HepG2 (cell line): ENCODE measurements at regions of chr11 and their contacts with region 1.

Region 1: DNA sequence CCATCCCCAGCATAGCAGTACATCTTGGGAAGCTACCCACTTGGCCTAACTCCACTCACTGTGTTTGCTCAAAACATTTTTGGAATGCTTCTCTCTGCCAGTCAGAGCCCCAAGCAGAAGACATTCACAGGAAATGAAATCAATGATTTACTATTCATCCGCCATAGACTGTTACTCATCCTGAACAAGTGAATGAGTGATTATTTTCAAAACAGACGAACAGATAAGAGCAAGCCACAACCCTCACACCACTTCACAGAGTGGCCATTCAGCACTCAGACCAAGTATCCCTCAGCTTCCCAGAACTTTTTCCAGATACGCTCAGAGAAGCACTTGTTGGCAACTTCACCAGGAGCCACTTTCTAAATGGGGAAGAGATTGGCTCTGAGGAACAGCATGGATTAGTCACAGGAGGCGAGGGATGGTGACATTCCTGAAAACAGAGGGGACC is 13.0 kb upstream of the UBASH3B start:
- DNase-seq: peak; percentile 94
- ATAC-seq: peak; percentile 98
- H3K4me3 ChIP-seq: peak overlapping the region in 1 of 3 experiments; percentile 22; a peak in 1 of 6 replicates
- H3K27ac ChIP-seq: peak overlapping the region; percentile 60
- H3K4me1 ChIP-seq: peaks cover 34% of the 10 kb centered on the region
- H3K27me3 ChIP-seq: no peaks in the 10 kb centered on the region
- CTCF ChIP-seq: no peak
- EP300 ChIP-seq: peak in 1 of 2 experiments; percentile 51; a peak in 1 of 4 replicates
- POLR2A ChIP-seq: 0 out of 4 replicates have a peak, but pooled peaks of 1 of the 2 experiments have one; percentile 33
- RAD21 ChIP-seq: no peak

Region 2: GRCh38 chr11:122593473-122594420 is 48.8 kb before region 1 on chr11:
- CTCF ChIA-PET with region 1: no interaction called
- POLR2A ChIA-PET with region 1: no interaction called
- in situ Hi-C with region 1: no loop called
- intact Hi-C with region 1: no loop called
- DNase-seq: no peak
- ATAC-seq: no peak
- H3K4me3 ChIP-seq: no peak overlapping the region
- H3K27ac ChIP-seq: no peak overlapping the region
- H3K4me1 ChIP-seq: no peaks in the 10 kb centered on the region
- H3K27me3 ChIP-seq: peaks cover 0 to under 1% of the 10 kb centered on the region in 2 experiments; a peak in 1 of 5 replicates
- CTCF ChIP-seq: no peak
- EP300 ChIP-seq: no peak
- POLR2A ChIP-seq: no peak
- RAD21 ChIP-seq: no peak

Region 3: GRCh38 chr11:122655527-122656072 is 13.1 kb after region 1 on chr11 and contains the start of gene UBASH3B:
- CTCF ChIA-PET with region 1: no interaction called
- POLR2A ChIA-PET with region 1: interaction called, 18 read pairs
- in situ Hi-C with region 1: no loop called
- intact Hi-C with region 1: no loop called
- DNase-seq: peak; percentile 47
- ATAC-seq: peak; percentile 84
- H3K4me3 ChIP-seq: peak within 1 kb of the TSS; percentile 63 to 87 (median 81)
- H3K27ac ChIP-seq: no peak within 1 kb of the TSS
- H3K4me1 ChIP-seq: peaks cover 48% of the 10 kb centered on the region
- H3K27me3 ChIP-seq: peaks cover 0 to 19% of the 10 kb centered on the region in 2 experiments; a peak in 4 of 5 replicates
- CTCF ChIP-seq: peak; percentile 27; the same call in 1 of the 2 replicates
- EP300 ChIP-seq: no peak
- POLR2A ChIP-seq: peak in 1 of 2 experiments; percentile 48; a peak in 1 of 4 replicates
- RAD21 ChIP-seq: no peak
- total RNA-seq, gene UBASH3B: 4.4 and 5.1 TPM in 2 replicates

Region 4: DNA sequence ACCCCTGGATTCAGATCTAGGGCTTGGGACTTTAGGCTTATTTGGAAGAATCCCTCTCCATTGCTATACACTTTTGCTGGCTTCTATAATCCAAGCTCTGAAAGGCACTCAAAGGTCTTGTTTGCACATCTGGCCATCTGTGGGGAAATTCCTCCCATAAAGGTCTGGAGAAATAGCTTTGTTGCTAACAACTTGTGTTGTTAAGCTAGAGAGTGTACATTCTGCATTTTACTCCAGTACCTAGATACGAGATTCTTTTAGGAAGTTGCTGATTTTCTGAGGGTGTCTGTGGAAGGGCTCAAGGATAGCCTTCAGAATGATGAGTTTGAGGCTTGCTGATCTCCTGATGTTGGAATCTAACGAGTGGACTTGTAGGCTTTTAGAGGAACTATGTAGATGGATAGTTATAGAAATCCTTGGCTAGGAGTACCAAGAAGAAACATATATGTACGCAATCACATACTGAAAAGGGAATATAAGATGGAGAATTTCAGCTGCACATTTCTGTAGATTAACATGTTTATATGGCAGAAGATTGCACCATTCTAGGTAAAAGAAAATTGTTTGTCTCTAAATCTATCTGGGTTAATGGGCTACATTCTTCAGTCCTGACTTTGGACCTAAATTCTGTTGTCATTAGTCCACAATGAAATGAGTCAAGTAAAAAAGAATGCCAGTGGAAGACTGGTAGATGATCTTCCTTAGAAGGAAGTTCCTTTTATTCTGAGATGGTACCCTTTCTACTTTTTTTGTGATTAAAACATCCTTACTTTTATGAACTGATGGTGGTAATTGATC is 64.0 kb after region 1 on chr11:
- CTCF ChIA-PET with region 1: no interaction called
- POLR2A ChIA-PET with region 1: interaction called, 9 read pairs
- in situ Hi-C with region 1: no loop called
- intact Hi-C with region 1: loop called (anchors 2 kb)
- DNase-seq: peak; percentile 88
- ATAC-seq: peak; percentile 95
- H3K4me3 ChIP-seq: peak overlapping the region in 2 of 3 experiments; percentile 14 to 27; a peak in 2 of 6 replicates
- H3K27ac ChIP-seq: peak overlapping the region; percentile 78
- H3K4me1 ChIP-seq: peaks cover 35% of the 10 kb centered on the region
- H3K27me3 ChIP-seq: no peaks in the 10 kb centered on the region
- CTCF ChIP-seq: no peak
- EP300 ChIP-seq: peak; percentile 43 to 65; a peak in 2 of 4 replicates
- POLR2A ChIP-seq: no peak
- RAD21 ChIP-seq: no peak

Region 5: GRCh38 chr11:123062158-123062891 is 419.8 kb after region 1 on chr11:
- CTCF ChIA-PET with region 1: no interaction called
- POLR2A ChIA-PET with region 1: no interaction called
- in situ Hi-C with region 1: no loop called
- intact Hi-C with region 1: loop called (anchors 5 kb)
- DNase-seq: peak; percentile 97
- ATAC-seq: peak; percentile 94
- H3K4me3 ChIP-seq: peak overlapping the region; percentile 89 to 92 (median 90)
- H3K27ac ChIP-seq: peak overlapping the region; percentile 98
- H3K4me1 ChIP-seq: peaks cover 50% of the 10 kb centered on the region
- H3K27me3 ChIP-seq: no peaks in the 10 kb centered on the region; a peak in 1 of 5 replicates
- CTCF ChIP-seq: no peak
- EP300 ChIP-seq: peak in 1 of 2 experiments; percentile 73; a peak in 2 of 4 replicates
- POLR2A ChIP-seq: peak; percentile 58 to 63
- RAD21 ChIP-seq: no peak